ENCODE measurements at regions of chr19 and their contacts with region 1.

Region 1: DNA sequence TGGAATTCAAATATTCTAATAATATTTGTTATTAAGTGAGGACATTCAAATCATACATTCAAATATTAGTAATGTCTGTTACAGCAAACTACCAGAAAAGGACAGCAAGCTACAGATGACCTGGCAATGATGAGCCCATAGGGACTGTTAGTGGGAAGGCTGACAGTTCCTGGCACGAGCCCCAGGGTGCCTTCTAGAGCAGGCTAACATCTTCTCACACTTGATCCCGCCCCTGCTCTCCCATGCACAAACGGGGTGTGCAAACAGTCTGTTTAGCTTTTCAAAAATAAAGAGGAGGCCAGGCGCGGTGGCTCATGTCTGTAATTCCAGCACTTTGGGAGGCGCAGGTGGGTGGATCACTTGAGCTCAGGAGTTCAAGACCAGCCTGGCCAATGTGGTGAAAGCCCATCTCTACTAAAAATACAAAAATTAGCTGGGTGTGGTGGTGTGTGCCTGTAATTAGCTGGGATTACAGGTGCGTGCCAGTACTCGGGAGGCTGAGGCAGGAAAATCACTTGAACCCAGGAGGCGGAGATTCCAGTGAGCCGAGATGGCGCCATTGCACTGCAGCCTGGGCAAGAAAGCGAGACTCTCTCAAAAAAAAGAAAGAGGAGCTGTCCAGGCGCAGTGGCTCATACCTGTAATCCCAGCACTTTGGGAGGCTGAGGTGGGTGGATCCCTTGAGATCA is 9.6 kb upstream of the GARRE1 start:
- DNase-seq: no peak
- H3K4me3 ChIP-seq: no peak overlapping the region
- CTCF ChIP-seq: no peak

Region 2: GRCh38 chr19:34184880-34185491 is 59.8 kb before region 1 on chr19:
- in situ Hi-C with region 1: no loop called
- DNase-seq: no peak
- H3K4me3 ChIP-seq: no peak overlapping the region
- CTCF ChIP-seq: no peak

Region 3: DNA sequence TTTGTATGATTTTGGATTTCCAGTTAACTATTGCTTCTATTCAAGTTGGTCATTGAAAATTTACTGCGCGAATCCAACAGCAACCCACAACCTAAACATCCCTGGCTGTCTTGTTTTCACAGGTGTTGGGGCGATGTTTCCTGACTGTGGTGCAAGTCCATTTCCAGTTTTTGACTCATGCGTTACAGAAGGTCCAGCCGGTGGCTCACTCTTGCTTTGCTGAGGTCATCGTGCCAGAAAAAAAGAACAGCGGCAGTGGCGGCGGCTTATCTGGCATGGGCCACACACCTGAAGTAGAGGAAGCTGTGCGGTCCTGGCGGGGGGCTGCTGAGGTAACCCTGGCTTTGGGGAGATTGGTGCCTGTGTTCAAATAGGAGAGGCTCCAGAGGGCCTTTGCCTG is 75.0 kb after region 1 on chr19:
- in situ Hi-C with region 1: loop called (anchors 5 kb)
- DNase-seq: peak; percentile 46
- H3K4me3 ChIP-seq: no peak overlapping the region
- CTCF ChIP-seq: no peak

Measured in astrocyte of the cerebellum (primary cell).